ENCODE measurements at regions of chr1 and their contacts with region 1.

Region 1: DNA sequence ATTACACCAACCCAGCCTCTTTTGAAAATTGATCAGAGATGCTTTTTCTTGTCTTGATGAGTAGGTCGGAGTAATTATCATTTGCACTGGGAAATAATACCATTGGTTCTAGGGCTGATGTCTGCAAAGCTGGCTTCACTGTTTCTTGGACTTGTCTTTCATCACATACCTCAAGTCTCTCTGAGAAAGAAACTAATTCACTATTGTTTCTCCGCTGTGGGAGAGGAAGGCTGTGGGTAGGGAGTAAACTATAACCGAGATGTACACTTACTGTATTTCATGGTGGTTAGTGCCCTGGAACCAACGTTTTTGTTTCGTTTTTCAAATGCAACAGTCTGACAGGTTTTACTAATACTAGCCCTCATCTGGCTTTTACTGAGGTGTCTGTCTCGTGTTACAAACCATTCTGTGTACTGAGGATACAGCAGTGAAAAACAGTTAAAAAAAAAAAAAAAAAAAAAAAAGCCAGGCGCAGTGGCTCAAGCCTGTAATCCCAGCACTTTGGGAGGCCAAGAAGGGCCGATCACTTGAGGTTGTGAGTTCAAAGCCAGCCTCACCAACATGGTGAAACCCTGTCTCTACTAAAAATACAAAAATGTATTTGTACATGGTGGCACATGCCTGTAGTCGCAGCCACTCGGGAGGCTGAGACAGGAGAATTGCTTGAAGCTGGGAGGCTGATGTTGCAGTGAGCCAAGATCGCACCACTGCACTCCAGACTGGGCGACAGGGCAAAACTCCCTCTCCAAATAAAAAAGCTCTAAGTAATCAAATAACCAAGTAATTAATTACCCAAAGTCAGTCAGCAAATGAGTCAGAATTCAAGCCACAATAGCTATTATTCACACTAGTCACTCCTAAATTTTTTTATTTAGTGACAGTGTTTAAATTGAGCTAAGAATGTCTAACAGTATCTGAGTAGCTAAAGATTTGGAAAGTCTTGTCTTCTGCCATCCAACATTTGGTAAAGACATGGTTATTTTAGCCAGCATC is 23.3 kb downstream of the TOMM20 start:
- DNase-seq: no peak
- H3K4me3 ChIP-seq: no peak overlapping the region
- H3K27ac ChIP-seq: no peak overlapping the region
- H3K4me1 ChIP-seq: peaks cover 0 to 2% of the 10 kb centered on the region in 2 experiments; a peak in 1 of 4 replicates
- H3K27me3 ChIP-seq: no peaks in the 10 kb centered on the region
- CTCF ChIP-seq: no peak
- EP300 ChIP-seq: no peak
- RAD21 ChIP-seq: no peak

Region 2: GRCh38 chr1:235011599-235012435 is 93.5 kb before region 1 on chr1:
- CTCF ChIA-PET with region 1: no interaction called
- POLR2A ChIA-PET with region 1: no interaction called
- DNase-seq: peak; percentile 39
- H3K4me3 ChIP-seq: no peak overlapping the region
- H3K27ac ChIP-seq: peak overlapping the region; percentile 58 to 95; a peak in 3 of 4 replicates
- H3K4me1 ChIP-seq: peaks cover 7 to 9% of the 10 kb centered on the region in 2 experiments; a peak in 3 of 4 replicates
- H3K27me3 ChIP-seq: no peaks in the 10 kb centered on the region
- CTCF ChIP-seq: no peak
- EP300 ChIP-seq: peak; percentile 44 to 97; a peak in 3 of 4 replicates
- RAD21 ChIP-seq: no peak

Region 3: DNA sequence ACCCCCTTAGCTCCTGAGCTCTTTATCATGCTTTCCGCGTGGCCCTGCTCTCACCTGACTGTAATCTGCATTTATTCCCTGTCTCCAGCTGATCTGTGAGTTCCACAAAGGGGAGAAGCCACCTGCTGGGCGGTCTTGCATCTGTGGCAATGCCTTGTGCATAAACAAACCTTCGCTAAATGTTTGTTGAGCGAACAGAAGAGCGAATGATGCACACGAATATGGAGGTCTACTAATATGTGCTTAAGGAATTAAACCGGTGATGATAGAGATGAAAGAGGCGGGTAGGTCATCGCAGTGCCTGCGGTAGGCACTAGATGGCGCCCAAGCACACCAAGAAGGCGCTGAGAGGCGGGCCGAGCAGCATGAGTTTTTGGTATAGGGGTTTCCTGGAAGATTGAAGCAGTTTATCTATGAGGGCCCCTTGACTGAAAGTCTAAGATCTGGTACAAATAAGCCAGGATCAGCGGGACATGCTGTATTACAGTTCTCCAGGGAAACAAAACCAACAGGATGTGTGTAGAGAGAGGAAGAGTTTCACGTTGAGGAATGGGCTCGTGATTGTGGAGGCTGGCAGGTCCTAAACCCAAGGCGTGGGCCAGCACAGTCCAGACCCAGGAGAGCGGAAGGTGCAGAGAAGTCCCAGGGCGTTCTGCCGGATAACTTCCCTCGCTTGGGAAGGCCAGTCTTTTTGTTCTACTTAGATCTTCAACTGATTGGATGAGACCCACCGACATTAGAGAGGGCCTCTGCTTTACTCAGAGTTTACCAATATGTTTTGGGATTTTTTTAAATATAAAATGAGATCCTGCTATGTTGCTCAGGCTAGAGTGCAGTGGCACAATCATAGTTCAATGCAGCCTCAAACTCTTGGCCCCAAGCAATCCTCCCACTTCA is 11.4 kb before region 1 on chr1:
- CTCF ChIA-PET with region 1: interaction called, 19 read pairs
- POLR2A ChIA-PET with region 1: no interaction called
- DNase-seq: peak; percentile 83
- H3K4me3 ChIP-seq: no peak overlapping the region; a peak in 1 of 4 replicates
- H3K27ac ChIP-seq: no peak overlapping the region
- H3K4me1 ChIP-seq: peaks cover 4 to 8% of the 10 kb centered on the region in 2 experiments; a peak in 1 of 4 replicates
- H3K27me3 ChIP-seq: no peaks in the 10 kb centered on the region
- CTCF ChIP-seq: peak; percentile 96
- EP300 ChIP-seq: no peak
- RAD21 ChIP-seq: peak; percentile 88

Region 4: GRCh38 chr1:235122348-235122747 is 17.0 kb after region 1 on chr1:
- CTCF ChIA-PET with region 1: interaction called, 25 read pairs
- POLR2A ChIA-PET with region 1: no interaction called
- DNase-seq: no peak
- H3K4me3 ChIP-seq: no peak overlapping the region
- H3K27ac ChIP-seq: peak overlapping the region in 1 of 2 experiments; percentile 26; a peak in 1 of 4 replicates
- H3K4me1 ChIP-seq: peaks cover 9 to 10% of the 10 kb centered on the region in 2 experiments; a peak in 3 of 4 replicates
- H3K27me3 ChIP-seq: no peaks in the 10 kb centered on the region
- CTCF ChIP-seq: no peak
- EP300 ChIP-seq: 0 out of 4 replicates have a peak, but pooled peaks of 1 of the 2 experiments have one; percentile 10
- RAD21 ChIP-seq: no peak

Region 5: DNA sequence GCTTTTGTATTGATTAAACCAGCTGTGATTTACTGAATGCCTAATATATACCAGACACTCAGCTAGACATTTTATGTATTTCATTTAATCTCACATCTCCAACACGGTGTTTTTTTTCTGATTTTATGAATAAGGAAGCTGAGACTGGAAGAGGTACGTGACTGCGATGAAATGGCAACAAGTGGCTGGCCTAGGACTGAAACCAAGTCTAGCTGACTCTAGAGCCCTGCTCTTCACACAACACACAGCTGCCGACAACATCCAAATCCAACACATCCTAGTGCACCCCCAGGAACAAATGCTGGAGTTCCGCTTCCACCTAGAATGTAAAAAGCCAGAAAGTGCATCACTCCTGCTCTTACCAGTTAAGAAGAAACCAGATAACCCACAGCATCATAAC is 34.0 kb after region 1 on chr1:
- CTCF ChIA-PET with region 1: no interaction called
- POLR2A ChIA-PET with region 1: no interaction called
- DNase-seq: no peak
- H3K4me3 ChIP-seq: no peak overlapping the region
- H3K27ac ChIP-seq: no peak overlapping the region
- H3K4me1 ChIP-seq: peaks cover 0 to 2% of the 10 kb centered on the region in 2 experiments; a peak in 1 of 4 replicates
- H3K27me3 ChIP-seq: no peaks in the 10 kb centered on the region
- CTCF ChIP-seq: no peak
- EP300 ChIP-seq: no peak
- RAD21 ChIP-seq: no peak

Region 6: DNA sequence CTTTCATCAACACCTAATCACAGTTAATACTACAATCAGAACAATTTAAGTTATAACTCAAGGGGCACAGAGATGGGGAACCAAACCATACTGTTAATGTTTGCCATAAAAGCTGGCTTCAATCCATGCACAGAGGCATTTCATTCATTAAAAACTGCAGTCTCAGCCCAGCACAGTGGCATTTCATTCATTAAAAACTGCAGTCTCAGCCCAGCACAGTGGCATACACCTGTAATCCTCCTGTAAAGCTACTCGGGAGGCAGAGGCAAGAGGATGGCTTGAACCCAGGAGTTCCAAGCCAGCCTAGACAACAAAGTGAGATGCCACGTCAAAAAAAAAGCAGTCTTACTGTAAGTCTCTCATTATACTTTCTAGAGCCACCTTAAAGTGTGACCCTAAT is 193.4 kb after region 1 on chr1:
- CTCF ChIA-PET with region 1: no interaction called
- POLR2A ChIA-PET with region 1: no interaction called
- DNase-seq: no peak
- H3K4me3 ChIP-seq: no peak overlapping the region
- H3K27ac ChIP-seq: no peak overlapping the region
- H3K4me1 ChIP-seq: no peaks in the 10 kb centered on the region; a peak in 1 of 4 replicates
- H3K27me3 ChIP-seq: no peaks in the 10 kb centered on the region
- CTCF ChIP-seq: no peak
- EP300 ChIP-seq: no peak
- RAD21 ChIP-seq: no peak

Measured in SK-N-SH (cell line).